ENCODE measurements at regions of chr1 and their contacts with region 1.

Region 1: GRCh38 chr1:214328770-214329469 is 48.0 kb downstream of the SMYD2 start:
- DNase-seq: peak; percentile 76 to 83 (median 80)
- ATAC-seq: peak; percentile 90
- H3K4me3 ChIP-seq: no peak overlapping the region
- H3K27ac ChIP-seq: no peak overlapping the region
- H3K4me1 ChIP-seq: no peaks in the 10 kb centered on the region; a peak in 3 of 5 replicates
- H3K27me3 ChIP-seq: no peaks in the 10 kb centered on the region
- CTCF ChIP-seq: peak; percentile 91 to 97 (median 92)
- EP300 ChIP-seq: no peak
- POLR2A ChIP-seq: no peak
- RAD21 ChIP-seq: peak; percentile 97

Region 2: GRCh38 chr1:214213136-214213535 is 115.8 kb before region 1 on chr1:
- CTCF ChIA-PET with region 1: interaction called, 23 read pairs
- POLR2A ChIA-PET with region 1: interaction called, 3 read pairs
- in situ Hi-C with region 1: loop called (anchors 5 kb)
- intact Hi-C with region 1: loop called (anchors 1 kb)
- DNase-seq: no peak
- ATAC-seq: no peak
- H3K4me3 ChIP-seq: no peak overlapping the region
- H3K27ac ChIP-seq: no peak overlapping the region
- H3K4me1 ChIP-seq: 0 out of 5 replicates have a peak, but pooled peaks cover 0 to 3% of the 10 kb centered on the region in 2 experiments
- H3K27me3 ChIP-seq: peaks cover 0 to 11% of the 10 kb centered on the region in 2 experiments; a peak in 2 of 5 replicates
- CTCF ChIP-seq: no peak
- EP300 ChIP-seq: no peak
- POLR2A ChIP-seq: no peak
- RAD21 ChIP-seq: no peak

Region 3: DNA sequence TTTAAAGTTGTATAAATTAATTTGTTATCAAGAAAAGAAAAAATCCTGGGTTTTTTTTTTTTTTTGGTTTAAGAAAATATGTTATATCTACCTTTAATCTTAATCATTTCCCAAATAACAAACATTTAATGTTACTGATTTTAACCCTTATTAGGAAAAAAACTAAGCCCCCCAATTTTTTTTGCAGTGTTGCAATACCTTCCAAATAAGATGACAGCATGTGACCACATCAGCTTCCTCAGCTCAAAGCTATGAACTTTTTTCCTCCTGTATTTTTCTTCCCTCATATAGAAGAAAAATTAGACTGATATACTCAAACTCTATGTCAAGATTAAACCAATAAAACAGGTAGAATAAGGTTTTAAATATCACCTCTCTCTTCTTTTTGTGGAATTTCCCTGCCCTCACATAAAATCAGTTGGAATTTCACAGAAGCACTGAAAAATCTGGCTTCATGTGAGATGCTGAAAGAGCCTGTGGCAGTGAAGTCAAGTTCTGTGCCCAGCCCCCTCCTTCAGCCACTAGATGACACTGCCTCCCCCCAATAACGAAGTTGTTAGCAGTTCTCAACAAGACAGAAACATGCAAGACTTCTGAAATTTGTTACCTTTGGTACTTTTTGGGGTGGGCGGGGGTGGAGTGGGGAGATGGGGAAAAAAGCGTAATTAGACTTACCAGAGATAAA is 57.6 kb before region 1 on chr1:
- CTCF ChIA-PET with region 1: interaction called, 13 read pairs
- POLR2A ChIA-PET with region 1: no interaction called
- in situ Hi-C with region 1: loop called (anchors 5 kb)
- intact Hi-C with region 1: loop called (anchors 2 kb)
- DNase-seq: peak in 1 of 4 experiments; percentile 18
- ATAC-seq: peak; percentile 75
- H3K4me3 ChIP-seq: no peak overlapping the region
- H3K27ac ChIP-seq: no peak overlapping the region
- H3K4me1 ChIP-seq: no peaks in the 10 kb centered on the region
- H3K27me3 ChIP-seq: peaks cover 9 to 18% of the 10 kb centered on the region in 2 experiments; a peak in 4 of 5 replicates
- CTCF ChIP-seq: peak; percentile 12 to 47 (median 31); a peak in 3 of 6 replicates
- EP300 ChIP-seq: no peak
- POLR2A ChIP-seq: no peak
- RAD21 ChIP-seq: peak in 1 of 2 experiments; percentile 42; a peak in 2 of 4 replicates

Region 4: GRCh38 chr1:214584805-214585766 is 256.2 kb after region 1 on chr1:
- CTCF ChIA-PET with region 1: no interaction called
- POLR2A ChIA-PET with region 1: no interaction called
- in situ Hi-C with region 1: no loop called
- intact Hi-C with region 1: loop called (anchors 1 kb)
- DNase-seq: peak in 3 of 4 experiments; percentile 19 to 23 (median 21)
- ATAC-seq: peak; percentile 88
- H3K4me3 ChIP-seq: no peak overlapping the region
- H3K27ac ChIP-seq: no peak overlapping the region
- H3K4me1 ChIP-seq: no peaks in the 10 kb centered on the region
- H3K27me3 ChIP-seq: peaks cover 2 to 8% of the 10 kb centered on the region in 2 experiments; a peak in 3 of 5 replicates
- CTCF ChIP-seq: peak; percentile 24 to 72 (median 41); a peak in 4 of 6 replicates
- EP300 ChIP-seq: no peak
- POLR2A ChIP-seq: no peak
- RAD21 ChIP-seq: peak; percentile 70 to 80

Region 5: GRCh38 chr1:215526553-215527151 is 1197.7 kb after region 1 on chr1:
- CTCF ChIA-PET with region 1: interaction called, 8 read pairs
- POLR2A ChIA-PET with region 1: no interaction called
- in situ Hi-C with region 1: no loop called
- intact Hi-C with region 1: loop called (anchors 2 kb)
- DNase-seq: peak; percentile 28 to 68 (median 44)
- ATAC-seq: peak; percentile 84
- H3K4me3 ChIP-seq: no peak overlapping the region
- H3K27ac ChIP-seq: no peak overlapping the region
- H3K4me1 ChIP-seq: no peaks in the 10 kb centered on the region
- H3K27me3 ChIP-seq: no peaks in the 10 kb centered on the region
- CTCF ChIP-seq: peak; percentile 45 to 86 (median 58); a peak in 5 of 6 replicates
- EP300 ChIP-seq: no peak
- POLR2A ChIP-seq: no peak
- RAD21 ChIP-seq: peak; percentile 91 to 92

Measured in K562 (cell line).